Astrocyte of the cerebellum (primary cell): ENCODE measurements at regions of chr12 and their contacts with region 1.

Region 1: DNA sequence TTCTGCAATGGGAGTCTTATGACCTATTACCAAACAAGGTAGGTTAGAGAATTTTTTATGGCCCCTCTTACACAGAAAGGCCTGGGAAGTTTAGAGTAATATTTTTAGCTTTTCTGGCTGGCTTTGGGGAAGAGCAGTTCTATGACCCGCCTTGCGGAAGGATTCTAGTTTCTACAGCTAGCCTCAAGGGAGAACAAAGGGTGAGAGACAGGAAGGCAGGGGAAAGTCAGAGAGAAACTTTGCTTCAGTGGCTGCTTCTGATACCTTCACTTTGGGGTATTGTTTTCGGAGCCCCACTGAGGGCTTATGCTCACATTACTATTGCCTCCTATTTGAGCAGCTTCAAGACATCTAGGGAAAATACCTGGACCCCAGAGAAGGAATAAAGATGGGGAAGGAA is 80.7 kb upstream of the NUDT4 start:
- DNase-seq: no peak
- H3K4me3 ChIP-seq: no peak overlapping the region
- CTCF ChIP-seq: no peak

Region 2: GRCh38 chr12:93183940-93184671 is 112.9 kb before region 1 on chr12:
- in situ Hi-C with region 1: loop called (anchors 10 kb)
- DNase-seq: no peak
- H3K4me3 ChIP-seq: no peak overlapping the region
- CTCF ChIP-seq: no peak

Region 3: DNA sequence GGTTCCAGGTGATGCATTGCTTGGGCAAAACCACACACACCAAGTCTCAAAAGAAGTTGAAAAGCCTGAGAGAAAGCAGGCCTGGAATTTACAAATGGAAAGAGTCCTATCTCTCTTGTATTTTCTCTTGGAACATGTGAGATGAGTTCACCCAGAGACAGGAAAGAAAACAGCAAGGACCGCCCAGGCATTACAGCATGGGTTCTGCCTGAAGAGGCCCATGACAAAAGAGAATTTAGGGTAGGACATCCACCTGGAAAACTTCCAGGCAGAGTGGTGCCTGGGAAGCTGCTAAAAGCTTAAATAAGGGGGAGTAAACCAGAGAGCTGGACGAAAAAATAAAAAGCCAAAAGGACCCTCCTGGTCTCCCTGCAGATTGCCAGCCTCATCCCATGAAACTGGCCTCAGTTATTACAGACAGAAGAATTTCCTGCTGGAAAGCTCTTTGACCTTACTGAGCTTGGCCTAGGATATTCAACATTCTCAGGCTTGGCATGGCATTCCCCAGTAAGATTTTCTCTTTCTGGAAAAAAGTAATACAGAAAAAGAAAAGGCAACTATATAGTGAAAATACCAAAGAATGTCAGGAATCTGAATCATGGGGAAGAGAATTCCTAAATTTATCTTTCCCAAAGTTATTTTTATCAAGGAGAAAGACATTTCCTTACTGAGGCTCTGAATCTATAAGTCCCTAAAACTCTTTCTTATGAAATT is 40.6 kb before region 1 on chr12:
- in situ Hi-C with region 1: loop called (anchors 5 kb)
- DNase-seq: no peak
- H3K4me3 ChIP-seq: no peak overlapping the region
- CTCF ChIP-seq: no peak